Mammary epithelial cell (primary cell): ENCODE measurements at regions of chr2 and their contacts with region 1.

Region 1: DNA sequence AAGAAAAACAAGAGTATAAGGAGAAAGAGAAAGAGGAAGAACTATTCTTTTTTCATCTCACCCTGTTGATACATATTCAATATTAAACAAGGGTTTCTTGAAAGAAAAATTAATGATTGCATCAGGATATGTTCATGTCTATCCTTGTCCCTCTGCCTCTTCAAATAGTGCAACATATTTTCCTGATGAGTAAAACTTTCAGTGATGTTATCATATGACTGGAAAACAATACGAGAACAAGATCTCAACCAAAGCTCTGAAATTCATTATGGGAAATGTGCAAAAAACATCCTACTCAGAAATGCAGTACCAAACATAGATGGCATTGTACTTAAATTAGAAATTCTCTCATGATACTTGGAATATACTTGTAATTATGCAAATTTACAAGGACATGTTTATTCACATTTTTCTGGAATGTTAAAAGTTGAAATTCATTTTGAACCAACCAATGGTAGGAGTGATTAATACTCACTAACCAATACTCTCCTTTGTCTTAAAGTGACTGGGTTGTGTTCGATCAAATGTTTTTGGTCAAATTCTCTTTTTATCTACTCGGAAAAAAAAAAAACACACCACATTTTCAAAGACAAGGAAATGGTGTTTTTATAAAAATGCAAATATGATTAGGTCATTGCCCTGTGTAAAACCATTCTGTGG is 148.9 kb upstream of the GULP1 start:
- DNase-seq: peak; percentile 81
- H3K4me3 ChIP-seq: peak overlapping the region in 1 of 3 experiments; percentile 15
- H3K27ac ChIP-seq: peak overlapping the region; percentile 94
- H3K4me1 ChIP-seq: peaks cover 18% of the 10 kb centered on the region
- H3K27me3 ChIP-seq: no peaks in the 10 kb centered on the region
- CTCF ChIP-seq: no peak

Region 2: DNA sequence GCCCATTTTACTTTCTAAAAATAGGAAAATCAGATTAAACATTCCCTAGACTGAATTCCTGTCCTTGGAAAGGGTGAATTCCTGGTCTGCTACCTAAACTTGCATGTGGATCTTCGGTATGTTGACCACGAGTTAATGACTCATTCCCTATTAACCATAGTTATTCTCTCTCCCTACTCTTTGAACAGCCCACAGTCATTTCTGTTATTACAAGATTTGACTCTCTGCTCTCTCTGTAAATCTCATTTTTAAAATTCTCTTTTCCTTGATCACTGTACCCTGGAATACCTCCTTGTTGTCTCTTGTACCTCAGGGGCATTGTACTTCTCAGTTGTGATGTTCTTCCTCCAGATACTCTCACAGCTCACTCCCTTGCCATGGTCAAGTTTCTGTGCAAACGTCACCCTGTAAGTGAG is 57.0 kb after region 1 on chr2:
- CTCF ChIA-PET with region 1: no interaction called
- dilution Hi-C with region 1: no loop called
- in situ Hi-C with region 1: no loop called
- intact Hi-C with region 1: loop called (anchors 5 kb)
- DNase-seq: peak; percentile 87
- H3K4me3 ChIP-seq: no peak overlapping the region
- H3K27ac ChIP-seq: peak overlapping the region; percentile 82
- H3K4me1 ChIP-seq: peaks cover 26% of the 10 kb centered on the region
- H3K27me3 ChIP-seq: no peaks in the 10 kb centered on the region
- CTCF ChIP-seq: no peak